Activated naive CD4-positive, alpha-beta T cell treated with anti-CD3 and anti-CD28 coated beads, Interleukin-2, amount 10 ng/mL, durations not matched to agents 7 days and 5 days (primary cell): ENCODE measurements at regions of chr1 and their contacts with region 1.

Region 1: GRCh38 chr1:10494754-10495474 is 20.2 kb downstream of the PEX14 start:
- DNase-seq: peak; percentile 87
- H3K4me3 Mint-ChIP-seq: peak overlapping the region; percentile 70
- H3K27ac Mint-ChIP-seq: peak overlapping the region; percentile 86
- H3K4me1 Mint-ChIP-seq: peaks cover 50% of the 10 kb centered on the region
- H3K27me3 Mint-ChIP-seq: no peaks in the 10 kb centered on the region

Region 2: DNA sequence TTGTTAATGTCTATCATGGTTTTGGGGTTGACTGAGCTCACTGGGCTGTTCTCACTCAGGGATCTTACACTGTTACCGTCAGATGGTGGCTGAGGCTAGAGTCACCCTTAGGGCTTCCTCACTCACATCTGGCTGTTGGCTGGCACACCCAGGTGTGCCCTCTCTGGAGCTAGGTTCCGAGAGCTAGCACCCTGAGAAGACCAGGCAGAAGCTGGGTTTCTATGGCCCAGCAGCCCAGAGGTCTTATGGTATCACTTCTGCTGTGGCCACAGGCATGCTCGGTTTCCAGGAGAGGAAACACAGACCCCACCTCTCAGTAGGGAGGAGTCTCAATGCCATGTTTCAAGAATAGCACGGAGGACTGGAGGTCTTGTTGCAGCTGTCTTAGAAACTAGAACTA is 305.3 kb before region 1 on chr1:
- CTCF ChIA-PET with region 1: no interaction called
- DNase-seq: peak; percentile 29
- H3K4me3 Mint-ChIP-seq: no peak overlapping the region
- H3K27ac Mint-ChIP-seq: no peak overlapping the region
- H3K4me1 Mint-ChIP-seq: no peaks in the 10 kb centered on the region
- H3K27me3 Mint-ChIP-seq: peaks cover 7% of the 10 kb centered on the region

Region 3: DNA sequence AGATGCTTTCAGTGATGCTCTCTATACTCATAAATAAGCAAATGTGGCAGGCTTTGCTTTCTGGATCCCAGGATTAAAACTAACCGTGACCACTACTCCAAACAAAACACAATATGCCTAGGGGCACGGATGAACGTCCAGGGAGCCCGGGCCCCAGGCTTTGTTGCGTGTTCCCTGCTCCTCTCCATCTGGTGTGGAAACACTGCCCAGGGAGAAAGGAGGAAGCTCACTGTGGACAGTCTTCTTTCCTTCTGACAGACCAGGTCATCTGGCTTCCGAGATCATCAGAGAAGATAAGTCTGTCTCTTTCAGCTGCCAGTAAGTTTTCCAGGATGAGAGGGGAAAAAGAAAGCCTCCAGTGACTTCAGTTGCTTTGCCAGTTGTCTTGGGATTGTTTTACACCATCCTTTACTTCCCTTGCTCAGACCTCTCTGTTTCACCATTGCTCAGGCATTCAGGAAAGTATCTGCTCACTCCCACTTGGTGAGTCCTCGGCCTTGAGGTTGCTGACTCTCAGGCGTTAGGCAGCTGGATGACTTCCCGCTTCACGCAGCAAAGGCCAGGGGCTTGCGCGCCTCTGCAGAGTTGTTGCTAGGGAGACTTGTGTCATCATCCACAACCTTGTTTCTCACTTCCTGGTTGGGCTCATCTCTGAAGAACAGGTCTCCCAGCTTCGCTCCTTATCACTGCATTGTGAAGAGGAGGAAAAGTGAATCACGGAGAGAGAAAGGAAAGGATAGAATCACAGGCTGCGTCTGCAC is 116.7 kb before region 1 on chr1:
- CTCF ChIA-PET with region 1: interaction called, 10 read pairs
- DNase-seq: no peak
- H3K4me3 Mint-ChIP-seq: no peak overlapping the region
- H3K27ac Mint-ChIP-seq: no peak overlapping the region
- H3K4me1 Mint-ChIP-seq: no peaks in the 10 kb centered on the region
- H3K27me3 Mint-ChIP-seq: no peaks in the 10 kb centered on the region

Region 4: DNA sequence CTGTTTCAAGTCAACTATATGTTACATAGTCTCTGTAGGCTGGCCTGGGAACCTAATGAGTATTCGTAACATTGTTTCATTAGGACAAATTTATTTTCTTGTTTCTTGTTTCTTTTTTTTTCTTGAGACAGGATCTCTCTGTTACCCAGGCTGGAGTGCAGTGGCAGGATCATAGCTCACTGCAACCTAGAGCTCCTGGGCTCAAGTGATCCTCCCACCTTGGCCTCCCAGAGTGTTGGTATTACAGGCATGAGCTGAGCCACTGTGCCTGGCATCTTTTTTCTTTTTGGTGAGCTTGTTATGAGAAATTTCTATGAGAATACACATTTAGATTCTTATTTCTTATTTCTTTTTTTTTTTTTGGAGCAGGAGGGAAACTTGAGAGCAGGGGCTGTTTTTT is 57.9 kb before region 1 on chr1:
- CTCF ChIA-PET with region 1: interaction called, 13 read pairs
- DNase-seq: no peak
- H3K4me3 Mint-ChIP-seq: no peak overlapping the region
- H3K27ac Mint-ChIP-seq: no peak overlapping the region
- H3K4me1 Mint-ChIP-seq: peaks cover 6% of the 10 kb centered on the region
- H3K27me3 Mint-ChIP-seq: no peaks in the 10 kb centered on the region

Region 5: DNA sequence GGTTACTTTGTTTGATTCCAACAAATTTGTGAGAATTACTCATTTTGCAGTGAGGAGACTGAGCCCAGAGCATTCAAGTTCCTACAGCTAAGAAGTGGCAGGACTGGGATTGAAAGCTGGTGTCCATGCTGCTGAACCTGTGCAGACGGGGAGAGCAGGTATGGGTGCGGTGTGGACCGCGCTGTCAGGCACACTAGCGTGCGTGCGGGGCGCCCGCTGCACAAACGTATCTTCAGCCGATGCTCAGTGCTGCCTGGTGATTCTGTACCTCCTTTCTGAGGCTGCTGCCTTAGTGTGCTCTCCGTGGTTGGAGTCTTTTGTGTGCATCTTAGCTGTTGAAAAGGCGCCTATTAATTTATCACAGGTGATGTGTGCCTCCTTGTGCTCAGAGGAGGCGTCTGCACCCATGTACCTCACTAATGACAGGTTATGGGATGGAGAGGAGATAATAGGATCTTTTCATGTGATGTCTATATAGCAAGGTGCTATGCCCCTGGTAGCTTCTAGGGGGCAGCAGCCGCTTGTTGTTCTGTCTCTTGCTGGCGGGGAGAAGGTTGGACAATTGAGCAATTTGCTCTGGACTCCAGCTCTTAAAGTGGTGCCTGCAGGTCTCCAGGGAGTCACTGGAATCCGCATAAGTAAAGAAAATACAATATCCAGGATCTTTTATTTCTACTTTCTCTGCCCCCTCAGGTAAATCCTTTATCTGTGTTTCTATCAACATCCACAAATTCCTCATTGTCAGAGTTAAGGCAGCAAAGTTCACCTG is 12.4 kb after region 1 on chr1:
- CTCF ChIA-PET with region 1: interaction called, 67 read pairs
- DNase-seq: peak; percentile 74
- H3K4me3 Mint-ChIP-seq: no peak overlapping the region
- H3K27ac Mint-ChIP-seq: peak overlapping the region; percentile 62
- H3K4me1 Mint-ChIP-seq: peaks cover 62% of the 10 kb centered on the region
- H3K27me3 Mint-ChIP-seq: no peaks in the 10 kb centered on the region

Region 6: DNA sequence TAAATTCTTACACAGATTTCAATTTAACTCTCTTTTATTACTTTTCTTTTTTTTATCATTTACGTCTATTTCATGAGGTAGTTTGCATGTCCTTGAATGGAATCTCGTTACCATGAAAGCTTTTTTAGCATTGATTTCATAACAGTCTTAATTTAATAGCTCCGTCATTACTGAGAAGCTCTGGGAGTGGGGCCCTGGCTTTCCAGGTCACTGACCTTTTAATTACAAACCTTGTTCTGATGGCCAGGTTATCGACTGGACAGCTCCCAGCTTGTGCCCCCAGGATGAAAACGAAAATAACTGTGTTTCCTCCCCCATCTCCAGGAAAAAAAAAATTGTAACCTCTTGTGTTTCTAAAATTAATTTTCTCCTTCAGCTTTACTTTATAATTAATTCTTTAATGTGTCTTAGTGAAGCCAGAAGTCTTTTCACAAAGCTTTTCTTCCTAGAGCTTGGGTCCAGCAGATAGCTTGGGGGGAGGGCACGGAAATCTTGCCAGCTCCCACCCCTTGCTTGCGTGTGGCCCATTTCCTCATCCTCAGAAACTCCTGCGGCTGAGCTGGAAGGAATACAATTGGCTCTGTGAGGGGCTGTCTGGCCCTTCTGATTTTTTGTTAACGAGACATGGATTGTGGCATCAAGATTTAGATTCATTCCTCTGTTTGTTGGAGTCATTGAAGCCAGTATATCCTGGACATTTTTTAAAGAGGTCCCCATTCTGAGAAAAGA is 45.5 kb after region 1 on chr1:
- CTCF ChIA-PET with region 1: no interaction called
- DNase-seq: no peak
- H3K4me3 Mint-ChIP-seq: no peak overlapping the region
- H3K27ac Mint-ChIP-seq: no peak overlapping the region
- H3K4me1 Mint-ChIP-seq: peaks cover 37% of the 10 kb centered on the region
- H3K27me3 Mint-ChIP-seq: no peaks in the 10 kb centered on the region

Region 7: GRCh38 chr1:10870493-10871096 is 375.7 kb after region 1 on chr1:
- CTCF ChIA-PET with region 1: interaction called, 10 read pairs
- DNase-seq: no peak
- H3K4me3 Mint-ChIP-seq: no peak overlapping the region
- H3K27ac Mint-ChIP-seq: no peak overlapping the region
- H3K4me1 Mint-ChIP-seq: peaks cover 10% of the 10 kb centered on the region
- H3K27me3 Mint-ChIP-seq: peaks cover 80% of the 10 kb centered on the region